Activated CD8-positive, alpha-beta memory T cell treated with anti-CD3 and anti-CD28 coated beads, Interleukin-2, amount 10 ng/mL, durations not matched to agents 7 days and 5 days (primary cell): ENCODE measurements at regions of chr5 and their contacts with region 1.

Region 1: DNA sequence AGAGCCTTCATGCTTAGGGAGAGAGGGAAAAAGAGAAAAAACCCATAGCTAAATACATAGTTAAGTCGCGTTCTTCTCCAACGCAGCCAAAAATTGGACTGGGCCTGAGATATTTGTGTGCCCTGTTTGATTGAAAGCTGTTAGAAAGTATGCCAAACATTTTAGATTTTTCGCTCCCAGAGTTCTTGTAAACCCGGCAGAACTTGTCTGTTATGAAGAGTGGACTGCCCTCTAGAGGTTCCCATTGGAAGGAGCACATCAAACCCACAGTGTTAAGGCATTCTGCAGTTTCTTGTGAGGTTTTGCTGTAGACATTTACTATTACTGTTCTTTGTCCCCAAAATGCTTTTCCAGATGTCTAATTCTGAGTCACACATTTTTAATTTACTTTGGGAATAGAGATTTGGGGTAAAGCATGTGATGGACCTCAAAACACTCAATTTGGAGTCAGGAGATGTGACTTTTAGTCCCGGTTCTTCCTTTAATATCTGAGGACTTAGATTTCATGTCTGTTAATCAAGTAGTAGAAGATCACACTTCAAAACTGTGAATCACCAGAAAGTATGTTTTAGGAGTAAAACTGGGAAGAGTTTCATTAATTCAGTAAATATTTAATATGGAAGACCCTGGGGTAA is 96.6 kb downstream of the PCSK1 start:
- DNase-seq: peak; percentile 76
- ATAC-seq: peak; percentile 92
- H3K4me3 Mint-ChIP-seq: no peak overlapping the region
- H3K27ac Mint-ChIP-seq: no peak overlapping the region
- H3K4me1 Mint-ChIP-seq: no peaks in the 10 kb centered on the region
- H3K27me3 Mint-ChIP-seq: peaks cover 18% of the 10 kb centered on the region

Region 2: GRCh38 chr5:95858661-95859326 is 477.7 kb before region 1 on chr5:
- CTCF ChIA-PET with region 1: interaction called, 40 read pairs
- DNase-seq: peak; percentile 94
- ATAC-seq: peak; percentile 95
- H3K4me3 Mint-ChIP-seq: peak overlapping the region; percentile 53
- H3K27ac Mint-ChIP-seq: peak overlapping the region; percentile 37
- H3K4me1 Mint-ChIP-seq: peaks cover 44% of the 10 kb centered on the region
- H3K27me3 Mint-ChIP-seq: no peaks in the 10 kb centered on the region

Region 3: GRCh38 chr5:95870105-95870672 is 466.3 kb before region 1 on chr5:
- CTCF ChIA-PET with region 1: interaction called, 13 read pairs
- DNase-seq: peak; percentile 59
- ATAC-seq: peak; percentile 79
- H3K4me3 Mint-ChIP-seq: peak overlapping the region; percentile 58
- H3K27ac Mint-ChIP-seq: peak overlapping the region; percentile 94
- H3K4me1 Mint-ChIP-seq: peaks cover 38% of the 10 kb centered on the region
- H3K27me3 Mint-ChIP-seq: no peaks in the 10 kb centered on the region

Region 4: GRCh38 chr5:96601811-96602244 is 265.4 kb after region 1 on chr5:
- CTCF ChIA-PET with region 1: interaction called, 26 read pairs
- DNase-seq: peak; percentile 64
- ATAC-seq: peak; percentile 76
- H3K4me3 Mint-ChIP-seq: no peak overlapping the region
- H3K27ac Mint-ChIP-seq: no peak overlapping the region
- H3K4me1 Mint-ChIP-seq: peaks cover 2% of the 10 kb centered on the region
- H3K27me3 Mint-ChIP-seq: peaks cover 28% of the 10 kb centered on the region